Gastrocnemius medialis (tissue), 4 donors: ENCODE measurements at regions of chr6 and their contacts with region 1.

Region 1: GRCh38 chr6:150079604-150080003 is 10.7 kb upstream of the ULBP3 start:
- DNase-seq: no peak
- ATAC-seq: no peak
- H3K4me3 ChIP-seq: no peak overlapping the region
- H3K27ac ChIP-seq: no peak overlapping the region
- H3K4me1 ChIP-seq: no peaks in the 10 kb centered on the region
- H3K27me3 ChIP-seq: no peaks in the 10 kb centered on the region
- CTCF ChIP-seq: no peak
- POLR2A ChIP-seq: no peak

Region 2: GRCh38 chr6:149347067-149347466 is 732.5 kb before region 1 on chr6:
- in situ Hi-C with region 1: no loop called
- intact Hi-C with region 1: no loop called
- DNase-seq: no peak
- ATAC-seq: no peak
- H3K4me3 ChIP-seq: no peak overlapping the region
- H3K27ac ChIP-seq: no peak overlapping the region
- H3K4me1 ChIP-seq: peaks cover 12 to 23% of the 10 kb centered on the region in 2 donors
- H3K27me3 ChIP-seq: no peaks in the 10 kb centered on the region
- CTCF ChIP-seq: no peak
- POLR2A ChIP-seq: no peak

Region 3: DNA sequence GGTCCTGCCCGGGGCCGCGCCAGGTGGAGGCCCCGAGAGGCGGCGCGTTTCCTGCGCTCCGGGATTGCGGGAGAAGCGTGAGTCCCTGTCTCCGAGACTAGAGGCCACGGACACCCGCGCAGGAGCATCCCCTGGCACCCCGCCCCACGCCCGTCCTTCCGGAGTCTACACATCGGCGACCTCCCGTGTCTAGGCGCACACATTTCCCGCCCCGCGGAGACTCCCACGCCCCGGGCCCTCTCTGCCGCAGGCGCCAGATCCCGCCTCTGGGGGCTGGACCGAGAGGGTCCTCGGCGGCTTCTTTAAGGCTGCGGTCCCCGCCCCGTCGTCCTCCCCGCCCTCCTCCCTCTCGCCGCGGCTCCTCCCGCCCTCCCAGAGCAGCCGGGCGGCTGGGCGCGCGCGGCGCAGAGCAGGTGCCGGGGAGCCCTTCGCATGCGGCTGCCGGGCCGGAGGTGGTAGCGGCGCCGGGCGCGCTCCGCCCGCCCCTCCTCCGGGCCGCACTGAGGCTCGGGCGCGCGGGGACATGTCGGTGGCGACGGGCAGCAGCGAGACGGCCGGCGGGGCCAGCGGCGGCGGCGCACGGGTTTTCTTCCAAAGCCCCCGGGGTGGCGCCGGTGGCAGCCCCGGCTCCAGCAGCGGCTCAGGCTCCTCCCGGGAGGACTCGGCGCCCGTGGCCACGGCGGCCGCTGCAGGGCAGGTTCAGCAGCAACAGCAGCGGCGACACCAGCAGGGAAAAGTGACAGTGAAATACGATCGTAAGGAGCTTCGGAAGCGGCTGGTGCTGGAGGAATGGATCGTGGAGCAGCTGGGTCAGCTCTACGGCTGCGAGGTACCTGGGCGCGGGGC is 63.3 kb after region 1 on chr6 and contains the start of gene PPP1R14C:
- in situ Hi-C with region 1: no loop called
- intact Hi-C with region 1: loop called (anchors 5 kb)
- DNase-seq: peak in 1 of 2 donors; percentile 30
- ATAC-seq: peak; percentile 68 to 72
- H3K4me3 ChIP-seq: peak within 1 kb of the TSS; percentile 64 to 71 (median 67)
- H3K27ac ChIP-seq: peak within 1 kb of the TSS; percentile 69 to 83 (median 76)
- H3K4me1 ChIP-seq: peaks cover 25 to 36% of the 10 kb centered on the region in 2 donors
- H3K27me3 ChIP-seq: peaks cover 0 to 15% (median 5%) of the 10 kb centered on the region in 3 donors
- CTCF ChIP-seq: no peak
- POLR2A ChIP-seq: peak; percentile 55 to 66
- total RNA-seq, gene PPP1R14C: 14.9 to 37.0 (median 21.7) TPM

Region 4: DNA sequence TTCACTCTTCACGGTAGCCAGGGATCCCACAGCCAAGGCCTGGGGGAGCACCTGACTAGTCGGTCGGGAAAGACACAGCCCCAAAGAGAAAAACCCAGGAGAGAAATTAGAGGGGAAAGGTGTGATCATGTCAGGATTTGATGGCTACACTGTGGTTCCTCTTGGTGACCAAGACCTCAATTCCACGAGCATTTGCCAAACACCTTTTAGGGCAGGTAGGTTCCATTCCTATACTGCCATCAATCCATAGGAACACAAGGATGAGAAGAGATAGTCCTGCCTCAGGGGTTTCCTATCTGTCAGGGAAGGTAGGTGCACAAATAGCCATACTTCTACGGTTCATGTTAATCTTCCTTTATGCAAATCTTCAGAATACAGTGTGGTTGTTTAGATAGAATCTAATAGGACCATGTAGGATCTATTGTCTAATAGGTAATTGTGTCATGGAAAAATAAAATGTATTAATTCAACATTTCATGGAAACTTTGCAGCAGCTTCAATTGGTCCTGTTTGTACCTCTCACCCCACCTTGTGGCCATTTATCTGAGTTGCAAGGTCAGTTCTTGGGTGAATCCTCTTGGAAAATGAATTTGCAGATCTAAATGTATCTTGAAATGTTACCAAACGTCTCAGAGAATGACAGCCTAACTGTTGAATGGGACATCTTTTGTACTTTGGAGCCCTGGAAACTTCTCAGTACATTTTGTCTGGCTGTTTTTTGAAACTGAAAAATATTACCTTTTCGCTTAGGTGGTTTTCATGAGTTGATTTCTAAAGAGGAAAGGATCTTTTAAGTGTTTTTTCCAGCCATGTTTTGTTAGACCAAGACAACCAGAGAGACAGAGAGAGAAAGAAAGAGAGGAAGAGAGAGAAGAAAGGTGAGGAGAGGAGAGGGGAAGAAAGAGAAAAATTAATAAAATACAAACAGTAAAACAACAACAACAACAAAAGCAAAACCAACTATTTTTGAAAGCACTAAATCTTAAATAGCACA is 255.5 kb after region 1 on chr6:
- in situ Hi-C with region 1: loop called (anchors 5 kb)
- intact Hi-C with region 1: loop called (anchors 1 kb)
- DNase-seq: no peak
- ATAC-seq: peak; percentile 33 to 54
- H3K4me3 ChIP-seq: no peak overlapping the region
- H3K27ac ChIP-seq: no peak overlapping the region
- H3K4me1 ChIP-seq: no peaks in the 10 kb centered on the region
- H3K27me3 ChIP-seq: no peaks in the 10 kb centered on the region
- CTCF ChIP-seq: peak; percentile 79 to 92 (median 84)
- POLR2A ChIP-seq: no peak

Region 5: DNA sequence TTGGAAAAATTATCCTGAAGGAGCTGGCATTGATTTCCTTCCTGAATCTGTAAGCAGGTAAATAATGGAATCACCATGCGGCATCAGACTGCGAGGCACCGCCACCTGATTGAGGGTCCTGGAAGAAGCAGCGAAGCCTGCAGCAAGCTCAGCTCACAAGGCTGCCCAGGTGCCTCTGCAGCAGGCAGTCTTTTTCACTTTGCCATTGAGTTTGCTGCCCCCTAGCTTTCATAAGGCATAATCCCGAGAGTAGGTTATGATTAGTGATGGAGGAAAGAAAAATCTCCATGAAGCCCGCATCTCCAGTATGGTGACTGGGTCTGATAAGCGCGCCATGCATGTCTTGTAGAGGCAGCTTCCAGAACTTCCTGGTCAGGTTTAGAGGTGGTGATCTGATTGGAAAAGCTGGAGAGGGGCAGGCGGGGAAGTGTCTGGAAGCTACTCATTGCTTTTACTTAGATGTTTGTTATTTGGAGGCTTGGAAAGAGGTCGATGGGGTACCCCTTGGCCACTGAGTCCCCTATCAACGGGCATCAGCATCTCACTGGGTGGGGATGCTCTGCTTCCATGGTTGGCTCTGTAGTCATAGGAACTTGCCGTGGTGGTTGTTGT is 315.9 kb after region 1 on chr6:
- in situ Hi-C with region 1: loop called in 2 of 4 experiments (anchors 10 kb)
- intact Hi-C with region 1: loop called (anchors 2 kb)
- DNase-seq: peak; percentile 13 to 17
- ATAC-seq: peak; percentile 62 to 86
- H3K4me3 ChIP-seq: no peak overlapping the region
- H3K27ac ChIP-seq: no peak overlapping the region
- H3K4me1 ChIP-seq: no peaks in the 10 kb centered on the region
- H3K27me3 ChIP-seq: no peaks in the 10 kb centered on the region
- CTCF ChIP-seq: peak; percentile 38 to 70 (median 69)
- POLR2A ChIP-seq: no peak